ENCODE measurements at regions of chr12 and their contacts with region 1.

Region 1: DNA sequence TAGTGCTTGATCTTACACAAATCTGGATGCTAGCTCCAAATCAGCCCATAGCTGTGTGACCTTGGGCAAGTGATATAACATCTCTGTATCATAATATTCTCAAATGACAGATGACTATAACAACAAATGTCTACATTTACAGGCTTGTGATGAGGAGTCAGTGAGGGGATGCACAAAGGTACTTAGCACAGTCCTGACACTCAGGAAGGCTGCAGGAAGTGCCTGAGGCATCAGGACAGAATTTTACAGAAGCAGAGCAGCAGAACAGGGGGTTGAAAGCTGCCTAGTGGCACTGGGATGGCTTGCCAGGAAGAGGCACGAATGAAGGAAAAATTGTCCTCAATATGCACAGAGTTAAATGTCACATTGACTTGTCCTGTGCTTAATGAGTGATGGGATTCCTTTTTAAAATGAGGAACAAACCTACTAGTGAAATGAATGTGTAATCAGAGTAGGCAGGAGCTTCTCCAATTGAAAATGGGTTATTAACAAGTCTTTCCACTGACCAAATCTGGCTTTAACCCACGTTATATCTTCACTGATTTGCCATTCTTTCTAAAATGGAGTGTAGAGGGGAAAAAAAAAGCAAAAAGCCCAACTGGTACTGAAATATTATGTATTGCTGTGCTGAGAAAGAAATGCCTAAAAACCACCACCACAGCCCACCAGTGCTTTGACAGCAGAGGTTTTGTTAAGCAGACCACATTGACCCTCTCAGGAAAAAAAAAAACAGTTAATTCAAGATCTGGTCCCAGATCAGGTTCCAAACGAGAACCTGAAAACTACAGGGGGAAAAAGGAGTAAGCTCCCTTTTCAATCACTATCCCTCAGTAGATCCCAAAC is 11.6 kb downstream of the BTG1 start:
- DNase-seq: no peak
- H3K4me3 ChIP-seq: no peak overlapping the region
- CTCF ChIP-seq: no peak

Region 2: DNA sequence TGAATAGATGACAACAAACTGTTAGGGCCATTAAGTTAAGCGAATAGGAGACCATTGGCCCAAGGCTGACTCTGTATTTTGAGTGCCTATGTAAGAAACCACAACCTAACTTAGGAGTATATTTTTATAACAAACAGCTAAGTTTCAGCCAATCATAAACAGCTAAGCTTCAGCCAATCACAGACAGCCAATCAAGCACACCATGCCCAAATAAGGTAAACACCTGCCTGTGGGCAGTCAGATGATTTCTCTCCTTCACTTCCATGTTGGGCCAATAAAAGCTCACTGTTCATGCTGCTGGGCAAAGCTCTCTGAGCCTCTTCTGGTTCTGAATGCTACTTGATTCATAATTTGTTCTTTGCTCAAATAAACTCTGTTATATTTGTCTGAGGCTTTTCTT is 333.0 kb before region 1 on chr12:
- in situ Hi-C with region 1: no loop called
- DNase-seq: no peak
- H3K4me3 ChIP-seq: no peak overlapping the region
- CTCF ChIP-seq: no peak

Region 3: GRCh38 chr12:92049403-92049802 is 84.6 kb before region 1 on chr12:
- in situ Hi-C with region 1: loop called (anchors 5 kb)
- DNase-seq: no peak
- H3K4me3 ChIP-seq: no peak overlapping the region
- CTCF ChIP-seq: no peak

Measured in astrocyte of the cerebellum (primary cell).